PC-9 (cell line): ENCODE measurements at regions of chr2 and their contacts with region 1.

Region 1: GRCh38 chr2:215319500-215319899 is 7.6 kb downstream of the ATIC start:
- DNase-seq: no peak
- H3K4me3 ChIP-seq: no peak overlapping the region
- H3K27ac ChIP-seq: no peak overlapping the region
- H3K4me1 ChIP-seq: peaks cover 19% of the 10 kb centered on the region
- H3K27me3 ChIP-seq: no peaks in the 10 kb centered on the region
- CTCF ChIP-seq: no peak

Region 2: GRCh38 chr2:214753455-214753854 is 566.0 kb before region 1 on chr2:
- CTCF ChIA-PET with region 1: no interaction called
- POLR2A ChIA-PET with region 1: no interaction called
- intact Hi-C with region 1: no loop called
- DNase-seq: no peak
- H3K4me3 ChIP-seq: no peak overlapping the region
- H3K27ac ChIP-seq: no peak overlapping the region
- H3K4me1 ChIP-seq: no peaks in the 10 kb centered on the region
- H3K27me3 ChIP-seq: no peaks in the 10 kb centered on the region
- CTCF ChIP-seq: no peak

Region 3: GRCh38 chr2:215002500-215002899 is 317.0 kb before region 1 on chr2:
- CTCF ChIA-PET with region 1: no interaction called
- POLR2A ChIA-PET with region 1: no interaction called
- intact Hi-C with region 1: no loop called
- DNase-seq: peak in 1 of 2 experiments; percentile 24
- H3K4me3 ChIP-seq: no peak overlapping the region
- H3K27ac ChIP-seq: no peak overlapping the region
- H3K4me1 ChIP-seq: no peaks in the 10 kb centered on the region
- H3K27me3 ChIP-seq: no peaks in the 10 kb centered on the region
- CTCF ChIP-seq: peak; percentile 89

Region 4: DNA sequence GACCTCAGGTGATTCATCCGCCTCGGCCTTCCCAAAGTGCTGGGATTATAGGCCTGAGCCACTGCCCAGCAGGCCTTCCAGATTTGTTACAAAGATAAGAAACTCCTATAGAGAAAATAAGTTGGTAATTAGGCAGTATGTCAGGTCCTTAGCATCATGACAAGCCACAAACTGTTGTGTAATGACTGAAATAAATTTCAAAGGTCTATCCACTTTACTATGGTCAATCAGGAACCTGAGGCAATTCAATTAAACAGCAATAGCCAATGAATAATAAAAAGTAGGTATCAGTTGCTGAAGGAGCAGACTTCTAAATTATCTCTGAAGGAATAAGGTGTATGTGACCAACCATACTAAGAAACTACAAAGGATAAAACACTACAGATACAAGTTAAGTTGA is 70.0 kb before region 1 on chr2:
- CTCF ChIA-PET with region 1: no interaction called
- POLR2A ChIA-PET with region 1: no interaction called
- intact Hi-C with region 1: no loop called
- DNase-seq: peak in 1 of 2 experiments; percentile 57
- H3K4me3 ChIP-seq: no peak overlapping the region
- H3K27ac ChIP-seq: no peak overlapping the region
- H3K4me1 ChIP-seq: no peaks in the 10 kb centered on the region
- H3K27me3 ChIP-seq: no peaks in the 10 kb centered on the region
- CTCF ChIP-seq: no peak

Region 5: GRCh38 chr2:215442404-215442794 is 122.9 kb after region 1 on chr2:
- CTCF ChIA-PET with region 1: interaction called, 10 read pairs
- POLR2A ChIA-PET with region 1: no interaction called
- intact Hi-C with region 1: no loop called
- DNase-seq: no peak
- H3K4me3 ChIP-seq: no peak overlapping the region
- H3K27ac ChIP-seq: no peak overlapping the region
- H3K4me1 ChIP-seq: peaks cover 17% of the 10 kb centered on the region
- H3K27me3 ChIP-seq: no peaks in the 10 kb centered on the region
- CTCF ChIP-seq: no peak